ENCODE measurements at regions of chr16 and their contacts with region 1.

Region 1: DNA sequence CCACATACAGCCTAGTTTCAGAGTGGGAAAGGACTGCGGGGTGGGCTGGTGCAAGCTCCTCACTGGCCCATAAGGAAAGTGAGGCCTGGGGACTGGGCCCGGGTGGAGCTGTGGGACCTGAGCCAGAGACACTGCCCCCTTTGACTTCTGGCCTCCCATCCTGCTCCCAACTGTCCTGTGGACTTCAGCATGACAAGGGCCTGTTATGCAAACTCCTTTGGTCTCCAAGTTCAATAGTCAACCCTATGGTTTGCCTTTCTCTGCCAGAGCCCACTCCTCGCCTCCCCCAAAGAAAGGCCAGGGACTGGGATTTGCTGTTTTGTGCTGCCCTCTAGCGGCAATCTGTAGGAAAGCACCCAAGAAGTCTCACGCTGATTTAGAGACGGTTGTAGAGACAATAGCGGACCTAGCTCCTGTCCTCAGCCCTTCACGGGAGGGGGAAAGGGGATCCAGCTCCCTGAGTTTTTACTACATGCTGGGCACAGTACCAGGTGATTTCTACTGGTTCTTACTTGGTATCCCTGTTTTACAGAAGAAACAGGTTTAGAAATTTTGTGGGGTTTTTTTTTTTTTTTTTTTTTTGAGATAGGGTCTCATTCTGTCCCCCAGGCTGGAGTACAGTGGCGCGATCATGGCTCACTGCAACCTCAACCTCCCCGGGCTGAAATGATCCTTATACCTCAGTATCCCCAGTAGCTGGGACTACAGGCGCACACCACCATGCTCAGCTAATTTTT is 1.2 kb upstream of the TLCD3B start:
- DNase-seq: peak; percentile 86
- ATAC-seq: peak; percentile 55
- H3K4me3 Mint-ChIP-seq: peak overlapping the region; percentile 79
- H3K27ac Mint-ChIP-seq: no peak overlapping the region
- H3K4me1 Mint-ChIP-seq: peaks cover 35% of the 10 kb centered on the region
- H3K27me3 Mint-ChIP-seq: peaks cover 50% of the 10 kb centered on the region
- CTCF ChIP-seq: peak; percentile 89

Region 2: GRCh38 chr16:29784901-29785500 is 247.2 kb before region 1 on chr16:
- CTCF ChIA-PET with region 1: interaction called, 13 read pairs
- POLR2A ChIA-PET with region 1: interaction called, 3 read pairs
- DNase-seq: peak; percentile 94
- ATAC-seq: peak; percentile 95
- H3K4me3 Mint-ChIP-seq: peak overlapping the region; percentile 57
- H3K27ac Mint-ChIP-seq: no peak overlapping the region
- H3K4me1 Mint-ChIP-seq: peaks cover 26% of the 10 kb centered on the region
- H3K27me3 Mint-ChIP-seq: peaks cover 53% of the 10 kb centered on the region
- CTCF ChIP-seq: peak; percentile 69

Region 3: DNA sequence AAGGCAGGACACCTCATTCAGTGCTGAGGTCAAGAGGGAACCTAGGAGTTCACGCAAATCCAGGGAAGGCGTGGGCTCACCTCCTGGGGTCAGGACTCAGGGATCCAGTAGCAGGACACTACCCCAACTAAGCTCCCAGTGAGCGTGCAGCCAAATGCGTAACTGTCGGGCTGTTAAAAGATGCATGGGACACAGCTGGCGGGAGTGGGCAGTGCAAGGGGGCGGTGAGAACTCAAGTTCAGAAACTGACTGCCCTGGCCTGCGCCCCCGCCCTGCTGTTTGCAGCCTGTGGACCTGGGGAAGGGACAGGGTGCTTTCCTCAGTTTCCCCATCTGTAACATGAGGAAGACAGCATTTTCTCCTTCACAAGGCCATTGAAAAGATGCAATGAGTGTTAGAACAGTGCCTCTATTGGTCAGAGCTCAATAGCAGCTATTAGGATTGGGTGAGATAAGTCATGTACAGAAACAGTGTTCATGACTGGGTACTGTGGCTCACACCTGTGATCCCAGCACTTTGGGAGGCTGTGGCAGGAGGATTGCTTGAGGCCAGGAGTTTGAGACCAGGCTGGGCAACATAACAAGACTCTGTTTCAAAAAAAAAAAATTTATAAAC is 189.4 kb before region 1 on chr16:
- CTCF ChIA-PET with region 1: interaction called, 37 read pairs
- POLR2A ChIA-PET with region 1: no interaction called
- DNase-seq: no peak
- ATAC-seq: 0 out of 2 replicates have a peak, but pooled peaks have one; percentile 33
- H3K4me3 Mint-ChIP-seq: no peak overlapping the region
- H3K27ac Mint-ChIP-seq: no peak overlapping the region
- H3K4me1 Mint-ChIP-seq: no peaks in the 10 kb centered on the region
- H3K27me3 Mint-ChIP-seq: no peaks in the 10 kb centered on the region; the same call in 1 of the 2 replicates
- CTCF ChIP-seq: no peak

Region 4: DNA sequence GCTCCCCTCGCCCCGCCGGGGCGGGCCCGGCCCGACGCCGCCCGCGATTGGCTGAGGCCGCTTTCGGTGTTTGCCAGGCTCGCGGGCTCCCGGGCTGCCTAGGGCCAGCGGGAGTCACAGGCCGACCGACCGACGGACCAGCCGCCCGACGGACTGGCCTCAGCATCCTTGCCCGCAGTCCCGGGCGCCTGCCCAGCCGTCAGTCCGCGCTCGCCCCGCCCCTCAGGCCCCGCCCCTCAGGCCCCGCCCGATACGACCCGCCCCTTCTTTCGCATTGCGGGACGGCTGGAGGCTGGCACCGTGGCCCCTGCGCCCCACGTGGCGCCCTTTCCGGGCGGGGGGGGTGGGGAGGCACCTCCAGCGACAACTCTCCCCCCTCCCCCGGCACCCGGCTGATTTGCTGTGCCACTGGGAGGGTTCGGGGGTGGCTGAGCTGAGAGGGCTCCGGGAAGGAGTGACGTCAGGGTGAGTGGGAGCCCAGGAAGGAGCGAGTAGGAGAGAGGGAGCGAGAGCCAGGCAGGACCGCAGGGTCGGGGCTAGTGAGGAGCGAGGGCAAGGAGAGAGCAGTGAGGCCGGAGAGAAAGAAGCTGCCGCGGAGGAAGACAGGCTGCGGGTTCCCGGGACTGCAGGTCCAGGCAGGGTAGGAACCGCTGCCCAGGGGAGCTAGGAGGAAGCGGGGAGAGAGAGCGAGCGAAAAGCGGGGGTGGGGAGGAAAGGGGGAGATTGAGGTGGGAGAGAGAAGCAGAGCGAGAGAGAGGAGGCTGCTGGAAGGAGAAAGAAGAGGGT is 132.0 kb before region 1 on chr16 and contains the start of gene ASPHD1:
- CTCF ChIA-PET with region 1: interaction called, 42 read pairs
- POLR2A ChIA-PET with region 1: no interaction called
- DNase-seq: peak; percentile 86
- ATAC-seq: peak; percentile 54
- H3K4me3 Mint-ChIP-seq: peak within 1 kb of the TSS; percentile 98
- H3K27ac Mint-ChIP-seq: peak within 1 kb of the TSS; percentile 91
- H3K4me1 Mint-ChIP-seq: peaks cover 33% of the 10 kb centered on the region
- H3K27me3 Mint-ChIP-seq: no peaks in the 10 kb centered on the region
- CTCF ChIP-seq: no peak
- total RNA-seq, gene ASPHD1: 17.6 to 26.9 TPM (median 20.2 TPM) in 3 replicates

Region 5: DNA sequence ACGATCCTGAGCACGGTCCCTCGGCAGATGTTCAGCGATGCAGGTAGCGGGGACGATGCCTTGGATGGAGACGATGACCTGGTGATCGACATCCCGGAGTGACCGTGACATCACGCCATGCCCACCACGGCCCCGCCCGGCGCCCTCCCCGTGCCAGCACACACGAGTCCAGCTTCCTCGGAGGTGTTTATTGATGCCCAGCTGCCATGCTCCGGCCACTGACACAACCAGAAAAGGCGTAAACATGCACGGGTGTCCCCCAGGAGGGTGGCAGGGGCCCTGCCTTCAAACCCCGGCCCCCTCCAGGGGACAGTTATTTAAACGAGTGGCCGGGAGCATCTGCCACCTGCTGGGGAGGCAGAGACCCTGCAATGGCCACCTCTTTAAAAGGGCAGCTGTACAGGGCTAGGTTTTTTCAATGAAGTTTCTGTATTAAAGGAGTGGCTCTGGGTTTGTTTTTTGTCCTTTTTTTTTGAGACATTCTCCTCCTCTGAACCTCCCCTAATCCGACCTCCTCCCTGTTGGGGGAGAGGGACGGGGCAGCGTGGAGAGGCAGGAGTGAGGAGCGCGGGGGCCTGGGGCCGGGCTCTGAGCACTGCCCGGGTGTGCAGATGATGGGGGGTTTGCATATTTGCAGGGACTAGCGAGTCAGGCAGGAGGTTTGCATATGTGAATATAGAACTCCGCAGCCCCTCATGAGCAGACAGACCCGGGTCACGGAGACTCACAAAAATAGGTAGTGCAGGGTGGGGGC is 26.7 kb before region 1 on chr16:
- CTCF ChIA-PET with region 1: interaction called, 29 read pairs
- POLR2A ChIA-PET with region 1: interaction called, 3 read pairs
- DNase-seq: no peak
- ATAC-seq: peak; percentile 14
- H3K4me3 Mint-ChIP-seq: no peak overlapping the region
- H3K27ac Mint-ChIP-seq: no peak overlapping the region
- H3K4me1 Mint-ChIP-seq: peaks cover 16% of the 10 kb centered on the region
- H3K27me3 Mint-ChIP-seq: peaks cover 10% of the 10 kb centered on the region
- CTCF ChIP-seq: peak; percentile 50; the same call in 1 of the 2 replicates

Region 6: GRCh38 chr16:30065143-30065850 is 33.0 kb after region 1 on chr16 and contains the start of gene ALDOA:
- CTCF ChIA-PET with region 1: interaction called, 19 read pairs
- POLR2A ChIA-PET with region 1: interaction called, 3 read pairs
- DNase-seq: peak; percentile 92
- ATAC-seq: peak; percentile 86
- H3K4me3 Mint-ChIP-seq: peak within 1 kb of the TSS; percentile 96
- H3K27ac Mint-ChIP-seq: peak within 1 kb of the TSS; percentile 99
- H3K4me1 Mint-ChIP-seq: peaks cover 37% of the 10 kb centered on the region
- H3K27me3 Mint-ChIP-seq: no peaks in the 10 kb centered on the region
- CTCF ChIP-seq: no peak
- total RNA-seq, gene ALDOA: 1,537 to 1,958 TPM (median 1,913 TPM) in 3 replicates

Region 7: GRCh38 chr16:30082545-30083090 is 50.4 kb after region 1 on chr16:
- CTCF ChIA-PET with region 1: no interaction called
- POLR2A ChIA-PET with region 1: no interaction called
- DNase-seq: no peak
- ATAC-seq: peak; percentile 50
- H3K4me3 Mint-ChIP-seq: no peak overlapping the region
- H3K27ac Mint-ChIP-seq: no peak overlapping the region
- H3K4me1 Mint-ChIP-seq: peaks cover 4% of the 10 kb centered on the region
- H3K27me3 Mint-ChIP-seq: no peaks in the 10 kb centered on the region
- CTCF ChIP-seq: no peak

Region 8: DNA sequence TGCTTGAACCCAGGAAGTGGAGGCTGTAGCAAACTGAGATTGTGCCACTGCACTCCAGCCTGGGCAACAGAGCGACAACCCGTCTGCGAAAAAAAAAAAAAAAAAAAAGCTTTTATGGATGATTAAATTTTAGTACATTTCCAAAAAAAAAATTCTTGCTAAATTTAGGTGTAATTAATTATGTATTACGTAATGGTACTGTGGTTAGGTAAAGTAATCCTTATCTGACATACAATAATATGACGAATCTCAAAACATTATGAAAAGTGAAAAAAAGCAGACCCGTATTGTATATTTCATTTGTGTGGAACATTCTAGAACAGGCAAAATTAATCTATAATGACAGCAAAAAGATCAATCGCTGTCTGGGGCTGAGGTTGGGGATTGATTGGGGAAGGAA is 140.8 kb after region 1 on chr16:
- CTCF ChIA-PET with region 1: no interaction called
- POLR2A ChIA-PET with region 1: no interaction called
- DNase-seq: no peak
- ATAC-seq: no peak
- H3K4me3 Mint-ChIP-seq: no peak overlapping the region
- H3K27ac Mint-ChIP-seq: no peak overlapping the region
- H3K4me1 Mint-ChIP-seq: no peaks in the 10 kb centered on the region
- H3K27me3 Mint-ChIP-seq: peaks cover 13% of the 10 kb centered on the region
- CTCF ChIP-seq: no peak

Measured in WTC11 (cell line).